PC-9 (cell line): ENCODE measurements at regions of chr9 and their contacts with region 1.

Region 1: DNA sequence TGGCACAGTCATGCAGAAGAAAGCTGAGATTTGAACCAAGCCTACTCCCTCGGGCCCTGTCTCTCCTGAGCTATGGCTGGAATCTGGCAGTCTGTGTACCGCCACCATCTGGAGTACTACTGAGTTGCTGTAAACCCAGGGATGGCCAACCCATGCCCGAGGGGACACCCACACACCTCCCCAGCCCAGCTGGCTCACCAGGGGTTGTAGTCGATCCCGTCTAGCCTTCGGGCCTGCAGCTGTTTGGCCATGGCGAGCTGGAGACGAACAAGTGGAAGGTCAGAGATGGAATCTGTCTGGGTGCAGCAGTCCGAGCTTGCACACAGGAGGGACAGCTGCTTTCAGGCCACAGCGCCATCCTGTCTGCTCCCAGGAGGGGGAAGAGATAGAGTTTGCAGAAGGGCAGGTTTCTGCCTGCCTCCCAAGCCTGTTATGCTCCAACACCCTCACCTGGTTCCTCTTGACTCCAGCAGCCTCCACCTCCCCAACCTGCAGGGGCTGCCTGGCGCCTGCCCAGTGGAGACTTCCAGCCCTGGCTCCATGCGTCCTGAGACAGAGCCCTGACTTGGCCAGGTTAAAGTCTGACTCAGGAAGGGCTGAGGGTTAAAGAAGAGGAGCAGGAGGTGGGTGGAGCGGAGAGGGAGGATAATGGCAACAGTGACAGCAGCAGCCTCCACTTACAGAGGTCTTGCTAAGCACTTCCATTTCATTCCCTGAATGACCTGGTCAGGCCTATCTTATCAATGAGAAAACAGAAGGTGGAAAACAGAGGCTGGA is 15.7 kb upstream of the SPOUT1 start:
- DNase-seq: no peak
- H3K4me3 ChIP-seq: no peak overlapping the region
- H3K27ac ChIP-seq: no peak overlapping the region
- H3K4me1 ChIP-seq: no peaks in the 10 kb centered on the region
- H3K27me3 ChIP-seq: no peaks in the 10 kb centered on the region
- CTCF ChIP-seq: no peak

Region 2: GRCh38 chr9:128714586-128715435 is 130.5 kb before region 1 on chr9:
- CTCF ChIA-PET with region 1: interaction called, 10 read pairs
- POLR2A ChIA-PET with region 1: no interaction called
- intact Hi-C with region 1: no loop called
- DNase-seq: no peak
- H3K4me3 ChIP-seq: no peak overlapping the region
- H3K27ac ChIP-seq: no peak overlapping the region
- H3K4me1 ChIP-seq: peaks cover 4% of the 10 kb centered on the region; the same call in 1 of the 2 replicates
- H3K27me3 ChIP-seq: no peaks in the 10 kb centered on the region
- CTCF ChIP-seq: no peak

Region 3: GRCh38 chr9:128921881-128922763 is 76.8 kb after region 1 on chr9:
- CTCF ChIA-PET with region 1: interaction called, 13 read pairs
- POLR2A ChIA-PET with region 1: no interaction called
- intact Hi-C with region 1: no loop called
- DNase-seq: no peak
- H3K4me3 ChIP-seq: no peak overlapping the region
- H3K27ac ChIP-seq: no peak overlapping the region
- H3K4me1 ChIP-seq: no peaks in the 10 kb centered on the region
- H3K27me3 ChIP-seq: no peaks in the 10 kb centered on the region
- CTCF ChIP-seq: no peak